Dendritic cell treated with granulocyte-macrophage colony-stimulating factor and Interleukin-4, amounts not matched to agents 40 ng/mL and 50 ng/mL, for 4 days (primary cell): ENCODE measurements at regions of chr1 and their contacts with region 1.

Region 1: DNA sequence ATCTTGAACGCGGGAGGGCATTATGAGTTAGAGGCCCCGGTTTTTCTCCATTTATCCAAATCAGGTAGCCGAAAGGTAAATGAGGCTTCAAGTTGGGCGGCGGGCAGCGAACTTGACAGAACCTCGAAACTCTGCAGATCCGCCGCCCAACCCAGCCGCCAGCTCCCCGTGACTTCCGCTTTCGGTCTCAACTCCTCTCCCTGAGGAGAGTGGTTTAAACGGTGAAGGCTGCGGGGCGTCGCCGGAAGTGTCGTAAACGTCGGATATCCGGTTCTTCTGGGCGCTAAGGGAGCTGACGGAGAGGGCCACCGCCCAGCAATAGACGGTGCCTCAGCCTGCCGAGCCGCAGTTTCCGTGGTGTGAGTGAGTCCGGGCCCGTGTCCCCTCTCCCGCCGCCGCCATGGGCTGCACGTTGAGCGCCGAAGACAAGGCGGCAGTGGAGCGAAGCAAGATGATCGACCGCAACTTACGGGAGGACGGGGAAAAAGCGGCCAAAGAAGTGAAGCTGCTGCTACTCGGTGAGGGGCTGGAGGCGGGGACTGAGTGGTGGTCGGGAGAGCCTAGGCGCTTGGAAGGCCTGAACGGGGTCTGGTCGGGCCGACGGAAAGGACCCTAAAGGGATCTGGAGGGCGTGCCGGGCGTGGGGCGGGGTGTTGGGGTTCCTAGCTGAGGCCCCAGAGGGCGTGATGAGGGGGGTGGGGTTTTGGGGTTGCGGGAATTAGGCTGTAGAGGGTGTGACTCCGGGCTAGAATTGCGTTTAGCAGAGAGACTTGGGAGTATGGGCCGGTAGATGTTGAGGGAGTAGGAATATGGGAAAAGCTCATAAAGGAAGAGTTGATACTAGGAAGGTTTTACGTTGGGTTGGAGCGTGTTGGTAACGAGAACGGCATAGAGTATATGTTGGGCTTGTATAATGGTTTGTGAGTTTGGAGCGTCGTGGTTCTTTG is at the start of gene GNAI3:
- H3K4me3 Mint-ChIP-seq: peak within 1 kb of the TSS; percentile 90
- H3K27ac Mint-ChIP-seq: peak within 1 kb of the TSS; percentile 98
- H3K4me1 Mint-ChIP-seq: peaks cover 30% of the 10 kb centered on the region
- H3K27me3 Mint-ChIP-seq: no peaks in the 10 kb centered on the region

Region 2: GRCh38 chr1:109432336-109432735 is 116.3 kb before region 1 on chr1:
- intact Hi-C with region 1: no loop called
- H3K4me3 Mint-ChIP-seq: no peak overlapping the region
- H3K27ac Mint-ChIP-seq: no peak overlapping the region
- H3K4me1 Mint-ChIP-seq: peaks cover 6% of the 10 kb centered on the region
- H3K27me3 Mint-ChIP-seq: peaks cover 10% of the 10 kb centered on the region

Region 3: DNA sequence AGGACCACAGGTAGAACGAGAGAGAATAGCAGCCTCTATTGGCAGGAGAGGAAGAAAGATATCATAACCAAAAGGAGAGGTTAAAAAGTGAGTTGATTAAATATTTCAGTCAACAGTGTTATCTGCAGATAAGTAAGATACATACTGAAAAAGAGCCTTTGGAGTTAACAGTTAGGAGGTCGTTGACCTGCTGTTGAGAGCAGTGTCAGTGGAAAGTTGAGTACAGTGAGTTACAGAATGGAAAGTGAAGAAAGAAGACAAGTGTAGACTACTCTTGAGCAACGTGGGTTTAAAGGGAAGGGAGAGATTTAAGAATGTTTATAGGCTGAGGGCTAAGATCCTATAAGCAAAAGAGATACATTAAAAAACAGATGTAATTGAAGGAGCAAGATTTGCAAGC is 40.6 kb after region 1 on chr1:
- intact Hi-C with region 1: loop called (anchors 5 kb)
- H3K4me3 Mint-ChIP-seq: no peak overlapping the region
- H3K27ac Mint-ChIP-seq: no peak overlapping the region
- H3K4me1 Mint-ChIP-seq: peaks cover 6% of the 10 kb centered on the region
- H3K27me3 Mint-ChIP-seq: no peaks in the 10 kb centered on the region

Region 4: DNA sequence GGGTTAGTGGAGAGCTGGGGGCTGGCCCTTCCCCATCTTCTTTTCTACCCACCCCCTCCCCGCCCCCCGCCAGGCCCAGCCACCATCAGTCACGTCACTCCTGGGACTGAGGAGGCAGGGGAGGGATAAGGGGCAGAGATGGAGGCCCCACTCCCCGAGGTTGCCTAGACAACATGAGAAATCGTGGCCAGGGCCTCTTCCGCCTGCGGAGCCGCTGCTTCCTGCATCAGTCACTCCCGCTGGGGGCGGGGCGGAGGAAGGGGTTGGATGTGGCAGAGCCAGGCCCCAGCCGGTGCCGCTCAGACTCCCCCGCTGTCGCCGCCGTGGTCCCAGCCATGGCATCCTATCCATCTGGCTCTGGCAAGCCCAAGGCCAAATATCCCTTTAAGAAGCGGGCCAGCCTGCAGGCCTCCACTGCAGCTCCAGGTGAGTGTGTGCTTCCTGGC is 72.3 kb after region 1 on chr1:
- intact Hi-C with region 1: loop called (anchors 2 kb)
- H3K4me3 Mint-ChIP-seq: peak overlapping the region; percentile 94
- H3K27ac Mint-ChIP-seq: peak overlapping the region; percentile 91
- H3K4me1 Mint-ChIP-seq: peaks cover 94% of the 10 kb centered on the region
- H3K27me3 Mint-ChIP-seq: no peaks in the 10 kb centered on the region

Region 5: DNA sequence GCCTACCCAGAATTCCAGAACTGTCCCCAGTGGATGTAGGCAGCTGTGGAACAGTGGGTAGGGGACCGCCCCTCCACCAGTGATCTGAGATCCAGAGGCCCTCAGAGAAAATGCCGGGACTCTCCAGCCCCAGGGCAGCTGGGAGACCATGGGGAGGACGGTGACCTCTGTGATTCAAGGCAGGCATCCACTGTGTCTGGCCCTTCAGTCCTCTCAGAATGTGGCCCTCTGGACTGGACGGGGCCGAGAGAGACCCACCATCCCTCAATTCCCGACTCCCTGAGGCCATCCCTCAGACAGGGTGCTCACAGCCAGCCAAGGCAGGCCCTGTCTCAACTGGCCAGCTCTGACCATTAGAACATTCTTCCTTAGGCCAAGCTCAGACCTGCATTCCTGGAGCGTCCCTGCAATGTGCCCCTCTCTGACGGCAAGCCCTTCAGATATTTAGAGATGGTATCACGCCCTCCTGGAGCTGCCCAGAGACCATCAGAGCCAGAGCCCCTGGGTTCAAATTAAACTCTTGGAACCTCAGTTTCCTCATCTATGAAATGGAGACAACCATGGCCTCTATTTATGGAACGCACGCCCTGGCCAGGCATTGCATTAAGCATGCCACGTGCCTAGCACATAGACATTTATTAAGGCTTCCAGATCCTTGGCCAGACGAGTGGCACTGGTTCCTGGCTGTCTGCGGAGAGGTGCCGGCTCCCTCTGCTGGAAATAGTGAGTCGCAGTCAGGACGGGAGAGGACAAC is 224.7 kb after region 1 on chr1:
- intact Hi-C with region 1: loop called (anchors 1 kb)
- H3K4me3 Mint-ChIP-seq: no peak overlapping the region
- H3K27ac Mint-ChIP-seq: no peak overlapping the region
- H3K4me1 Mint-ChIP-seq: peaks cover 26% of the 10 kb centered on the region
- H3K27me3 Mint-ChIP-seq: peaks cover 14% of the 10 kb centered on the region

Region 6: DNA sequence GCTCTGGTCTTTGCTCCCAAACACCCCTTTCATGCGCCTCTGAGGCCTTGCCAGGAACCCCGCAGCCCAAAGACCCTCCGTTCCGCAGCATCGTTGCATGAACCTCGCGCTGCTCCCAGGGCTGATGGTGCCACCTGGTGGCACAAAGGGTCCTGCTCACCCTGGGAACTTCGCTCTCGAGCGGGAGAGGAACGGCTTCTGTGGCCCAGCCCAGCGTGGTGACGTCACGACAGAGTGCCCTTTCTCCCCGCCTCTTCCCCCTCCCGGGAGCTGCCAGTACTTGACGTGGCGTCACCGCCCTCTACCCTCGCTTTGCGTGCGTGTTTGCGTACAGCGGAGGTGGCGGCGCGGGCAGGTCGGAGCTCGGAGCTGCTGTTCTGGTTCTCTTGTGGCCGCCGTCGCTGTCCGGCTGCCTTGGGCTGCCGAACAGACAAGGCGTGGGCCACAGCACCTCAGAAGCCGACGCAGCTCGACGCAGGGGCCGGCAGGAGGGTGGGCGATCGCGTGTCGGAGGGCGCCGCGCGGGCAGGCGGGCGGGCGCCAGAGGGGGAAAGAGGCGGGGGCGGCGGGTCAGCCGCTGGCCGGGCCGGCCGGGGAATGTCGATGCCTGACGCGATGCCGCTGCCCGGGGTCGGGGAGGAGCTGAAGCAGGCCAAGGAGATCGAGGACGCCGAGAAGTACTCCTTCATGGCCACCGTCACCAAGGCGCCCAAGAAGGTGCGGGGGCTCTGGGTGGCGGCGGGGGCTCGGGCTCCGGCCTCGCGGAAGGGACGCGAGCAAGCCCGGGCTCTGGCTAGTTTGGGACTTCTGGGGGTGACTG is 436.1 kb after region 1 on chr1 and contains the start of gene AHCYL1:
- intact Hi-C with region 1: loop called (anchors 2 kb)
- H3K4me3 Mint-ChIP-seq: peak within 1 kb of the TSS; percentile 98
- H3K27ac Mint-ChIP-seq: peak within 1 kb of the TSS; percentile 99
- H3K4me1 Mint-ChIP-seq: peaks cover 35% of the 10 kb centered on the region
- H3K27me3 Mint-ChIP-seq: peaks cover 4% of the 10 kb centered on the region